Activated CD4-positive, alpha-beta memory T cell treated with anti-CD3 and anti-CD28 coated beads for 36 hours (primary cell): ENCODE measurements at regions of chr2 and their contacts with region 1.

Region 1: DNA sequence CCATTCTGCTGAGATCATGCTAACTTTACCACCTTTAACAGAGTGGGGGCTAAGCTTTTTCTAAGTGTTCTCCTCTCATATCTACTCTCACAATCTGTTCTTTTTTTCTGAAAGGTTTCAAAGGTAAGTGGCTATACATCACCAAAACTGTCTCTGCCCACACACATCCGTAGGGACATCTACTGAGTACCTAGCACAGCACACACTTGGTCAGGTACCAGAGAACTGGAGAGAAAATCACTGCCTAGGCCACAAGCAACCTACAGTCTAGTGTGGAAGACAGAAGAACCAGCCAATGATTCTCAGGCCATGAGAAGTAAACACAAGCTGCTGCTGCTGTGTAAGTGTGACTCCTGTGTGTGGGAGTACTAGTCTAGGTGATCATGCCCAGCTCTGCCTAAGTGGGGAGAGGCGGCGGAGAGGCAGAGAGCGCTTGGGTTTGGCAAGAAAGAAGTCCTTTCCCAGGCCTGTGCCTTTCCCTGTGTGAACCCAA is 176.1 kb upstream of the ZFP36L2 start:
- DNase-seq: no peak
- H3K4me3 Mint-ChIP-seq: no peak overlapping the region
- H3K27ac Mint-ChIP-seq: no peak overlapping the region
- H3K4me1 Mint-ChIP-seq: peaks cover 10% of the 10 kb centered on the region
- H3K27me3 Mint-ChIP-seq: no peaks in the 10 kb centered on the region

Region 2: GRCh38 chr2:43387092-43388062 is 15.1 kb before region 1 on chr2:
- CTCF ChIA-PET with region 1: no interaction called
- POLR2A ChIA-PET with region 1: interaction called, 3 read pairs
- intact Hi-C with region 1: loop called (anchors 1 kb)
- DNase-seq: peak; percentile 20
- H3K4me3 Mint-ChIP-seq: no peak overlapping the region
- H3K27ac Mint-ChIP-seq: peak overlapping the region; percentile 28
- H3K4me1 Mint-ChIP-seq: peaks cover 31% of the 10 kb centered on the region
- H3K27me3 Mint-ChIP-seq: no peaks in the 10 kb centered on the region

Region 3: GRCh38 chr2:43419876-43420275 is 17.4 kb after region 1 on chr2:
- CTCF ChIA-PET with region 1: interaction called, 3 read pairs
- POLR2A ChIA-PET with region 1: no interaction called
- intact Hi-C with region 1: loop called (anchors 2 kb)
- DNase-seq: no peak
- H3K4me3 Mint-ChIP-seq: no peak overlapping the region
- H3K27ac Mint-ChIP-seq: no peak overlapping the region
- H3K4me1 Mint-ChIP-seq: peaks cover 10% of the 10 kb centered on the region
- H3K27me3 Mint-ChIP-seq: no peaks in the 10 kb centered on the region

Region 4: GRCh38 chr2:43430453-43430852 is 28.0 kb after region 1 on chr2:
- CTCF ChIA-PET with region 1: no interaction called
- POLR2A ChIA-PET with region 1: no interaction called
- intact Hi-C with region 1: no loop called
- DNase-seq: no peak
- H3K4me3 Mint-ChIP-seq: no peak overlapping the region
- H3K27ac Mint-ChIP-seq: no peak overlapping the region
- H3K4me1 Mint-ChIP-seq: peaks cover 21% of the 10 kb centered on the region
- H3K27me3 Mint-ChIP-seq: no peaks in the 10 kb centered on the region